SK-N-SH (cell line): ENCODE measurements at regions of chr6 and their contacts with region 1.

Region 1: GRCh38 chr6:114747987-114748630 is 405.3 kb upstream of the HS3ST5 start:
- DNase-seq: peak; percentile 14
- H3K4me3 ChIP-seq: peak overlapping the region in 1 of 2 experiments; percentile 30; a peak in 1 of 4 replicates
- H3K27ac ChIP-seq: no peak overlapping the region
- H3K4me1 ChIP-seq: no peaks in the 10 kb centered on the region
- H3K27me3 ChIP-seq: no peaks in the 10 kb centered on the region
- CTCF ChIP-seq: peak; percentile 92
- EP300 ChIP-seq: no peak
- RAD21 ChIP-seq: peak; percentile 79

Region 2: DNA sequence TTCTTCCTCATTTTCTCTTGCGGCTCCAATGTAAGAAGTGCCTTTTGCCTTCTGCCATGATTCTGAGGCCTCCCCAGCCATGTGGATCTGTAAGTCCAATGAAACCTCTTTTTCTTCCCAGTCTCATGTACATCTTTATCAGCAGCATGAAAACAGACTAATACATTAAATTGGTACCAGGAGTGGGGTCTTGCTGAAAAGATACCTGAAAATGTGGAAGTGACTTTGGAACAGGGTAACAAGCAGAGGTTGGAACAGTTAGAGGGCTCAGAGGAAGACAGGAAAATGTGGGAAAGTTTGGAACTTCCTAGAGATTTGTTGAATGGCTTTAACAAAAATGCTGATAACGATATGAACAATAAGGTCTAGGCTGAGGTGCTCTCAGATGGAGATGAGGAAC is 88.6 kb before region 1 on chr6:
- CTCF ChIA-PET with region 1: no interaction called
- POLR2A ChIA-PET with region 1: no interaction called
- DNase-seq: no peak
- H3K4me3 ChIP-seq: no peak overlapping the region
- H3K27ac ChIP-seq: no peak overlapping the region
- H3K4me1 ChIP-seq: no peaks in the 10 kb centered on the region
- H3K27me3 ChIP-seq: no peaks in the 10 kb centered on the region
- CTCF ChIP-seq: no peak
- EP300 ChIP-seq: no peak
- RAD21 ChIP-seq: no peak

Region 3: DNA sequence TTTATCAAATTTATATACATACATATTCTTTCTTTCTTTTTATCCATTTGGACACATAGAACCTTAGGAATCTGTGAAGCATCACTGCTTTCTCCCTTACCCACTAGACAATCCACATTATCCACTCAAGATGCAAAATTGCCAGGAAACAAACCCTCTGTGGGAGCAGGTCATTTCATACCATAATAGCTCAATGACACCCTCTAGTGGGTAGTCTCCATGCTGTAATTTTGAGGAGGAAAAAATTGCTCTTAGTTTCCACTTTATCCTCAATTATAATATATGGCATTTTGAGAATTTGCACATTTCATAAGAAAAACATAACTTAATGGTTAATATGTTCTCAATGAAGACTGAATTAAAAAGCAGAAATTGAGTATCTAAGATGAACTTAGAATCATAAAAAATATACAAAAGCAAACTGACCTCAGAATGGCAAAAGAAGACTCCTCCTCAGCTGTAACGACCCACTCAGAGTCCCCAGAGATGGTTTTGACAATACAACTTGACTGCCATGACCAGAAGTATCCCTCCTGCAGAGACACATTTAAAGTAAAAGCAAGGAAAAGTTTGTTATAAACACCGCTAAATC is 1148.5 kb after region 1 on chr6:
- CTCF ChIA-PET with region 1: interaction called, 19 read pairs
- POLR2A ChIA-PET with region 1: no interaction called
- DNase-seq: peak; percentile 58
- H3K4me3 ChIP-seq: peak overlapping the region in 1 of 2 experiments; percentile 20; a peak in 1 of 4 replicates
- H3K27ac ChIP-seq: no peak overlapping the region
- H3K4me1 ChIP-seq: no peaks in the 10 kb centered on the region
- H3K27me3 ChIP-seq: no peaks in the 10 kb centered on the region
- CTCF ChIP-seq: peak; percentile 85
- EP300 ChIP-seq: no peak
- RAD21 ChIP-seq: peak; percentile 95